ENCODE measurements at regions of chr3 and their contacts with region 1.

Region 1: DNA sequence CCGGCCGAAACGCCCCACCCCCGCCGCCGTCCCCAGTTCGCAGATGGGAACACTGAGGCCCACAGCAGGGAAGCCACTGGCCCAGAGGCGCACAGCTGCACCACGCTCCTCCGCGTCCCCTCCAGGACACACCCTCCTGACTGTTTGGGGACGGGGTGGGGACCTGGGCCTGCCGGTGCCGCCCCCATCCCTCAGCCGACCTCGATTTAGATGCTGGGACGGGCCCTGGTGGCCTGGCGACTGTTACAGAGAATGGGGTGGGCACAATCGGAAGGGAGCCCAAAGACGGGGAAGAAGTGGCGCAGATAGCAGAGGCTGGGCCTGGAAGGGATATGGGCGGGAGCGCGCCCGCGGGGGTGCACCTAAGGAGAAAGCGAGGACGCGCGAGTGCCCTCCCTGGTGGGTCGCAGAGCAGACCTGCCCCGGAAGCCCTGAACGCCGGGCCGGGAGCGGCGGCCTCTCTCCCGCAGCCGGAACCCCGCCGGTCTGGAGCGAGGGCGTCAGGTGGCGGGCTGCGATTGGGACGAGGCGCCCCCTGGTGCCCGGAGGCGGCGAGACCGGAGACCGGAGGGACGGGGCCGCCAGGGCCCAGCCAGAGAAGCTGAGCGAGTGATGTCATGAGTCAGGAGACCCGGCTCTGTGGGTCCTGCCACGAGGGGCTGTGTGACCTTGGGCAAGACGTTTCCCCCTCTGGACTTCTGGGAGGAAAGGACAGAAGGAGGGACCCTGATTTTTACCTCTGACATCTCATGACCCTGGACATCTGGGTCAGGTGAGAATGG is 78.4 kb downstream of the IQSEC1 start:
- DNase-seq: peak; percentile 68
- H3K4me3 ChIP-seq: peak overlapping the region; percentile 57 to 63 (median 62)
- H3K27ac ChIP-seq: no peak overlapping the region
- H3K4me1 ChIP-seq: peaks cover 17% of the 10 kb centered on the region
- H3K27me3 ChIP-seq: peaks cover 6% of the 10 kb centered on the region
- CTCF ChIP-seq: peak; percentile 53 to 84

Region 2: DNA sequence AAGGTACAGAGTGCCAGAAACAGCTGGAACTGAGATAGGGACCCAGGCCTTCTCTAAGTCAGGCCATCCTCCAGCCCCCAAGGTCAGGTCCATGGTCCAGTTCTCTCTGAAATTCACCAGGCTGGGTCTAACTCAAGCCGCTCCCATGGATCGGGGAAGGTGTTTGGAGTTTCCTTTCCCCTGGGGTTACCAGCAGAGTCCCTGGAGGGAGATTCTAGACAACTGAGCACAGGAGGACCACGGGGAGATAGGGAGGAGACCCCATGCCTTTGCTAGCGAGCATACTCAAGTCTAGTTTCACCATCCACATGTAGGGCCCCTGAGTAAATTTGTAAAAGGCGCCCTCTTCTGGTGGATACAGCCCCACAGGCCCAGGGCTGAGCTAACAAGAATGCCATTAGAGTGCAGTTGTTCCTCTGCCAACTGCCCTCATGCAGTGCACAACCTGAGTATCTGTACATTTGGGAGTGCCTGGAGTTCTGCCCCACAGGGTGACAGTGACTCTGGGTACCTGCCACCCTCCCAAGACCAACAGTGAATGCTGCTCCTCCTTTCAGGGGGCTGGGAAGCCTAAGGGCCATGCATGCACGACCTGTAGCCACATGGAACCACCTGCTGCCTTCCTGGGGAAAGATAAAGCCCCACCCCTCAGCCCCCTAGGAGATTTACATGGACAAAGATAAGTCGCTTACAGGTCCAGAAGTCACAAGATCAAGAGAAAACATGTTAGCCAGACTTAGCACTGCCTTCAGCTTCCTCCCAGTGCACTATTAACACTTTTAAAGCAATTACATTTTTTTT is 10.6 kb before region 1 on chr3:
- CTCF ChIA-PET with region 1: interaction called, 10 read pairs
- dilution Hi-C with region 1: no loop called
- in situ Hi-C with region 1: no loop called
- intact Hi-C with region 1: no loop called
- DNase-seq: peak; percentile 39
- H3K4me3 ChIP-seq: no peak overlapping the region
- H3K27ac ChIP-seq: no peak overlapping the region
- H3K4me1 ChIP-seq: no peaks in the 10 kb centered on the region
- H3K27me3 ChIP-seq: peaks cover 4% of the 10 kb centered on the region
- CTCF ChIP-seq: peak; percentile 77 to 86

Region 3: DNA sequence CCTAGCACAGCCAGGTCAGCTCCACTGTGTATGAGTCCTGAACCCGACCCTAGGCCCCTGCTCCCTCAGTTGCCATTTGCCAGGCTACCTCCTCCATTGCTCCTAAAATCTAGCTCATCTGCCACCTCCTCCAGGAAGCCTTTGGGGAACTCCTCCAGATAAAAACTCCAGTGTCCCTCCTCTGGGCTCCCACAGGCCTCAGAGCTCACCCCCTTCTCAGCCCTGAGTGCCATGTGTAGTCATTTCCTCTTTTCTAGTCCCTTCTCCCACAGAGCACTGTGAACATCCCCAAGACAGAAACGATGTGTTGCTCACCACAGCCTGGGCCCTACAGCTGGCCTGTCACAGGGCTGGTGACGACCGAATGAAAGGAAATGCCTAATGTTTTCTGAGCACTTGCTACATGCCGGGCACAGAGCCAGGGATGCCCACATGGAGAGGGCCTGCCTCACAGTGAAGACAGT is 17.5 kb after region 1 on chr3:
- CTCF ChIA-PET with region 1: no interaction called
- dilution Hi-C with region 1: no loop called
- in situ Hi-C with region 1: no loop called
- intact Hi-C with region 1: no loop called
- DNase-seq: no peak
- H3K4me3 ChIP-seq: no peak overlapping the region
- H3K27ac ChIP-seq: no peak overlapping the region
- H3K4me1 ChIP-seq: no peaks in the 10 kb centered on the region
- H3K27me3 ChIP-seq: no peaks in the 10 kb centered on the region
- CTCF ChIP-seq: no peak